ENCODE measurements at regions of chr14 and their contacts with region 1.

Region 1: DNA sequence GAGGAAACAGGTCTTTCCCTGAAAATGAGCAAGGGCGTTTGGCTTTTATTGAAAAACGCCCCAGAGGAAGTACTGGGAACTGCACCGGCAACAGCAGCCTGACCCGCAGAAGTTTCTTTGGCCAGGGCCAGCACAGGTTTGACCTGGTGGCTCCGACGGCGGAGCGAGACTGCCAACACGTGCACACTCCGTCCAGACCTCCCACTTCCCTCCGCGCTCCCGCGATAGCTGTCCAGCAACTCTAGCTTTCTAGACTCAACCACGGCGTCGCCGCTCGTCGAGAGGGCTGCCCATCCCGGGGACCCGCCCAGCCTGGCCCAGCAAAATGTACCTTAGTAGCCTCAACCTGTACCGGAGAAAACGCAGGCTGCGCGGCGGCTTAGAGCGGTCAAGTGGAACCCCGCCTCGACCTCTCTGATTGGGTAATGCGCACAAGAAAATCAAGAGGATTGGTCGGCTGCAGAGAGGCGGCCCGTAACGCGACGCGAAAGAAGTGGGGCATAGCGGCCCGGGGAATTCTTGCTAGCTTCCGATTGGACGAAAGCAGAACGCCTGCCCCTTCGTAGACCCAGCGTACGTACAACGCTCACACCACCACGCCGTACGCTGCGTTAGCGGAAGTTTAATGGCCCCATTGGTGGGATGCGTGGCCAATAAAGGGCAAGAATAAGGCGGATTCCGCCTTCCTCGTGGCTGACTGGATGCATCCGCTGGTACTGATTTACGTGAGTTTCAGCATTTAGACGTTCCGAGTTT is at the start of gene WDR89:
- DNase-seq: peak; percentile 100
- H3K4me3 ChIP-seq: peak within 1 kb of the TSS; percentile 90 to 95 (median 93)
- H3K27ac ChIP-seq: peak within 1 kb of the TSS; percentile 80
- H3K4me1 ChIP-seq: peaks cover 4% of the 10 kb centered on the region
- H3K27me3 ChIP-seq: no peaks in the 10 kb centered on the region
- CTCF ChIP-seq: peak; percentile 79
- POLR2A ChIP-seq: peak; percentile 81
- total RNA-seq, gene WDR89: 10.7 and 12.0 TPM in 2 replicates

Region 2: GRCh38 chr14:63388763-63389431 is 252.8 kb before region 1 on chr14:
- CTCF ChIA-PET with region 1: interaction called, 24 read pairs
- POLR2A ChIA-PET with region 1: no interaction called
- dilution Hi-C with region 1: no loop called
- intact Hi-C with region 1: loop called (anchors 1 kb)
- DNase-seq: peak; percentile 75
- H3K4me3 ChIP-seq: no peak overlapping the region
- H3K27ac ChIP-seq: no peak overlapping the region
- H3K4me1 ChIP-seq: no peaks in the 10 kb centered on the region
- H3K27me3 ChIP-seq: no peaks in the 10 kb centered on the region
- CTCF ChIP-seq: peak; percentile 73 to 81
- POLR2A ChIP-seq: no peak

Region 3: GRCh38 chr14:63614679-63615363 is 26.8 kb before region 1 on chr14:
- CTCF ChIA-PET with region 1: interaction called, 7 read pairs
- POLR2A ChIA-PET with region 1: interaction called, 3 read pairs
- dilution Hi-C with region 1: no loop called
- intact Hi-C with region 1: loop called (anchors 1 kb)
- DNase-seq: peak; percentile 98
- H3K4me3 ChIP-seq: peak overlapping the region in 1 of 3 experiments; percentile 35
- H3K27ac ChIP-seq: peak overlapping the region; percentile 90
- H3K4me1 ChIP-seq: peaks cover 30% of the 10 kb centered on the region
- H3K27me3 ChIP-seq: no peaks in the 10 kb centered on the region
- CTCF ChIP-seq: no peak
- POLR2A ChIP-seq: peak; percentile 62

Region 4: GRCh38 chr14:63727774-63728728 is 86.4 kb after region 1 on chr14 and contains the start of gene SGPP1:
- CTCF ChIA-PET with region 1: interaction called, 9 read pairs
- POLR2A ChIA-PET with region 1: interaction called, 3 read pairs
- dilution Hi-C with region 1: no loop called
- intact Hi-C with region 1: loop called (anchors 1 kb)
- DNase-seq: peak; percentile 71
- H3K4me3 ChIP-seq: peak within 1 kb of the TSS; percentile 28 to 80 (median 63)
- H3K27ac ChIP-seq: peak within 1 kb of the TSS; percentile 46
- H3K4me1 ChIP-seq: peaks cover 17% of the 10 kb centered on the region
- H3K27me3 ChIP-seq: no peaks in the 10 kb centered on the region
- CTCF ChIP-seq: peak; percentile 21 to 52
- POLR2A ChIP-seq: peak; percentile 79
- total RNA-seq, gene SGPP1: 7.6 and 7.9 TPM in 2 replicates

Region 5: GRCh38 chr14:63852817-63853731 is 211.4 kb after region 1 on chr14 and contains the start of gene SYNE2:
- CTCF ChIA-PET with region 1: no interaction called
- POLR2A ChIA-PET with region 1: no interaction called
- dilution Hi-C with region 1: no loop called
- intact Hi-C with region 1: loop called (anchors 5 kb)
- DNase-seq: peak; percentile 78
- H3K4me3 ChIP-seq: peak within 1 kb of the TSS; percentile 66 to 77 (median 77)
- H3K27ac ChIP-seq: peak within 1 kb of the TSS; percentile 66
- H3K4me1 ChIP-seq: peaks cover 15% of the 10 kb centered on the region
- H3K27me3 ChIP-seq: no peaks in the 10 kb centered on the region
- CTCF ChIP-seq: peak in 1 of 2 donors; percentile 17
- POLR2A ChIP-seq: peak; percentile 14
- total RNA-seq, gene SYNE2: 42.7 and 53.7 TPM in 2 replicates